Calu3 (cell line): ENCODE measurements at regions of chr20 and their contacts with region 1.

Region 1: DNA sequence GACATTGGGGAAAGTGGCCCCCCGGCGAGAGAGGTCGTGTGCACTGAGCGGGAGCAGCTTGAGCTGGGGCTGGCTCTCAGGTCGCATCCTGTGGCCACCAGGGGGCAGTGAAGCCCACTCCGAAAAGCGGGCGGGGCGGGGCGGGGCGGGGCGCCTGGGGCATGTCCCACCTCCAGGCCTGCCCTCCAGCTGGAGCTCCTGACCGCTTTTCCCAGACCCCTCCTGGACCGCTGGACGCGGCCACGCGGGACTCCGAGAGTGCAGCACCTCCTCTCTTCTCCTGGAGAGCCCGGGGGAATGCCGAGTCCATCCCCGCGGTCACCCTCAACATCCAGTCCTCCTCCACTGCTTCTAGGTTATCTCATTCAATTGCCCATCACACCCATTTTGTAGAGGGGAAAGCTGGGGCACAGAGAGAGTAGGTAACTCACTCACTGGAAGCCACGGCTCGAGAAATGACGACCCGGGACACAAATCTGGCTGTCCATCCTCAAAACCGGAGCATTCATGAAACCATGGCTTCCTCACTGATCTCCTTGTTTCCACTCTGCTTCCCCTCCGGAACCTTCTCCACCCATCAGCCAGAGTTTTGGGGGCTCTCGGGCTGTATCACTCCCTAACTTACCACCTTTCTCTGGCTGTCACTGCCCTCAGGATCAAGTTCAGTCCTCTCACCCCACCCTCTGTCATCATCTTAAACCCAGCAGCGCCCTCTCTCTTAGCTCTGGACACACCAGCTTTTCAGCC is 24.1 kb downstream of the COX4I2 start:
- DNase-seq: peak; percentile 90
- H3K4me3 Mint-ChIP-seq: peak overlapping the region; percentile 38
- H3K27ac Mint-ChIP-seq: peak overlapping the region; percentile 80
- H3K4me1 Mint-ChIP-seq: peaks cover 62% of the 10 kb centered on the region
- H3K27me3 Mint-ChIP-seq: no peaks in the 10 kb centered on the region
- CTCF ChIP-seq: peak; percentile 97

Region 2: GRCh38 chr20:31484001-31484400 is 177.8 kb before region 1 on chr20:
- CTCF ChIA-PET with region 1: no interaction called
- intact Hi-C with region 1: no loop called
- DNase-seq: no peak
- H3K4me3 Mint-ChIP-seq: no peak overlapping the region
- H3K27ac Mint-ChIP-seq: no peak overlapping the region
- H3K4me1 Mint-ChIP-seq: peaks cover 12% of the 10 kb centered on the region
- H3K27me3 Mint-ChIP-seq: peaks cover 29% of the 10 kb centered on the region
- CTCF ChIP-seq: no peak

Region 3: GRCh38 chr20:31630187-31630790 is 31.5 kb before region 1 on chr20:
- CTCF ChIA-PET with region 1: interaction called, 12 read pairs
- intact Hi-C with region 1: no loop called
- DNase-seq: no peak
- H3K4me3 Mint-ChIP-seq: no peak overlapping the region
- H3K27ac Mint-ChIP-seq: no peak overlapping the region
- H3K4me1 Mint-ChIP-seq: no peaks in the 10 kb centered on the region
- H3K27me3 Mint-ChIP-seq: no peaks in the 10 kb centered on the region
- CTCF ChIP-seq: no peak

Region 4: DNA sequence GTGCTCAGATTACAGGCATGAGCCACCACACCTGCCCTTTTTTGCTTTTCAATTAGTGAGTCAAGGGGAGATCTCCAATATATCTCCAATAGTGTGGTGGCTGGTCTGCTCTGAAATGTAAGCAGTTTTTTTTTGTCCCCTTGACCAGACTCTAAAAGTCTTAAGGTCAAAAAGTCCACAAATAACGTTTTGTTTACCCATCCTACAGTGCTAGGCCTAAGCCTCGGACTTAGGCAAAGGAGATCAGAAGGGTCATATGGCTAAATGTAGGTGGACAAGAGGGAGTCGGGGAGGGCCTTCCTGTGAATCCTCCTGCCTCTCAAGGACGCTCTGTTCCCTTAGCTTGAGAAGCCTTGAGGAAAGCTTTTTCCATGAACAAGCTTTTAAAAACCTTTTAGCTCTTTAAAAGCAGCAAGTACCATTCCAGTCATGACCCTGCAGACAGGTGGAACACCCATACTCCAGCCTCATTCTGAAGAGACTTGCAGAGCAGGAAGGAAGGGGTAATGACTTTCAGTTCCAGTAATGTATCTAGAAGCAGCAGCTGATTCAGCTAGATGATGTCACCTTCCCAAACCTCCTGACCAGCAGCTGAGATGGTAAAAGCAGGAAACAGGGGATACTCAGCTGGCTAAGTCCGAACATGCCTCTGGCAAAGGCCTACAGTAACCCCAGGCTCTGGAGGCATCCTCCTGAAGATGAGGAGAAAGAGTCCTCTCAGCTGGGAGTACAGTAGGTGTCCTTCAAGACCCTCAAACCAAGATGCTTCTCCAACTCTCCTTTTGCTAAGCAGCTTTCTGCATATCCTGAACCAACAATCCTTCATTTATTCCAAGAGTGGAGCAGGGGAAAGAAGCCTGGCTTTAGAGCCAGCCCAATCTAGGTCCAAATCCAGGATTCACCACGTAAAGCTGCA is 37.3 kb after region 1 on chr20:
- CTCF ChIA-PET with region 1: interaction called, 17 read pairs
- intact Hi-C with region 1: loop called (anchors 5 kb)
- DNase-seq: peak; percentile 76
- H3K4me3 Mint-ChIP-seq: peak overlapping the region; percentile 56
- H3K27ac Mint-ChIP-seq: peak overlapping the region; percentile 85
- H3K4me1 Mint-ChIP-seq: peaks cover 79% of the 10 kb centered on the region
- H3K27me3 Mint-ChIP-seq: no peaks in the 10 kb centered on the region
- CTCF ChIP-seq: no peak

Region 5: GRCh38 chr20:31704225-31705119 is 42.7 kb after region 1 on chr20:
- CTCF ChIA-PET with region 1: interaction called, 17 read pairs
- intact Hi-C with region 1: loop called (anchors 5 kb)
- DNase-seq: peak; percentile 97
- H3K4me3 Mint-ChIP-seq: peak overlapping the region; percentile 29
- H3K27ac Mint-ChIP-seq: peak overlapping the region; percentile 91
- H3K4me1 Mint-ChIP-seq: peaks cover 85% of the 10 kb centered on the region
- H3K27me3 Mint-ChIP-seq: no peaks in the 10 kb centered on the region
- CTCF ChIP-seq: no peak

Region 6: GRCh38 chr20:31712564-31713311 is 50.9 kb after region 1 on chr20:
- CTCF ChIA-PET with region 1: interaction called, 17 read pairs
- intact Hi-C with region 1: no loop called
- DNase-seq: peak; percentile 91
- H3K4me3 Mint-ChIP-seq: peak overlapping the region; percentile 97
- H3K27ac Mint-ChIP-seq: peak overlapping the region; percentile 94
- H3K4me1 Mint-ChIP-seq: peaks cover 100% of the 10 kb centered on the region
- H3K27me3 Mint-ChIP-seq: no peaks in the 10 kb centered on the region
- CTCF ChIP-seq: no peak

Region 7: DNA sequence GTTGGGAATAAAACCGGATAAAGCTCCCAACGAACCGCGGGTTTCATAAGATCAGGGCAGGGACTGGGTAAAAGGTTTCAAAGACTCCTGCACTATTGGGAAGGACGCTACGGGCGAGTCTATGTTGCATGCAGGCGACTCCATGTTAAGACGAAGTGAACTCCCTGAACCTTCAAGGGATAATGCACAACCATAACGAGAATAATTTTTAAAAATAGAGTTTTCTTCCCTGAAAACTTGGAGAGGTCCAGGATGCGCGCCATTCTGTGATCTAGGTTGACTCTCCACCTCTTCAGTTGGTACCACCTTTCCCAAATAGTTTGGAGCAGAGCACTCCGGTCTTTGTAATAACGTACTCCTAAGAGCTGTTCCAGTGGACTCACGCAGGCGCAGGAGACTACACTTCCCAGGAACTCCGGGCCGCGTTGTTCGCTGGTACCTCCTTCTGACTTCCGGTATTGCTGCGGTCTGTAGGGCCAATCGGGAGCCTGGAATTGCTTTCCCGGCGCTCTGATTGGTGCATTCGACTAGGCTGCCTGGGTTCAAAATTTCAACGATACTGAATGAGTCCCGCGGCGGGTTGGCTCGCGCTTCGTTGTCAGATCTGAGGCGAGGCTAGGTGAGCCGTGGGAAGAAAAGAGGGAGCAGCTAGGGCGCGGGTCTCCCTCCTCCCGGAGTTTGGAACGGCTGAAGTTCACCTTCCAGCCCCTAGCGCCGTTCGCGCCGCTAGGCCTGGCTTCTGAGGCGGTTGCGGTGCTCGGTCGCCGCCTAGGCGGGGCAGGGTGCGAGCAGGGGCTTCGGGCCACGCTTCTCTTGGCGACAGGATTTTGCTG is 77.1 kb after region 1 on chr20 and contains the start of gene TPX2:
- CTCF ChIA-PET with region 1: interaction called, 10 read pairs
- intact Hi-C with region 1: no loop called
- DNase-seq: peak; percentile 97
- H3K4me3 Mint-ChIP-seq: no peak within 1 kb of the TSS
- H3K27ac Mint-ChIP-seq: no peak within 1 kb of the TSS
- H3K4me1 Mint-ChIP-seq: peaks cover 11% of the 10 kb centered on the region
- H3K27me3 Mint-ChIP-seq: no peaks in the 10 kb centered on the region
- CTCF ChIP-seq: no peak
- total RNA-seq, gene TPX2: 157 and 179 TPM in 2 replicates

Region 8: GRCh38 chr20:32077190-32077589 is 415.4 kb after region 1 on chr20:
- CTCF ChIA-PET with region 1: no interaction called
- intact Hi-C with region 1: no loop called
- DNase-seq: no peak
- H3K4me3 Mint-ChIP-seq: no peak overlapping the region
- H3K27ac Mint-ChIP-seq: no peak overlapping the region
- H3K4me1 Mint-ChIP-seq: no peaks in the 10 kb centered on the region
- H3K27me3 Mint-ChIP-seq: peaks cover 99% of the 10 kb centered on the region
- CTCF ChIP-seq: no peak